ENCODE measurements at regions of chr3 and their contacts with region 1.

Region 1: GRCh38 chr3:72152551-72153476 is 367.9 kb upstream of the PROK2 start:
- DNase-seq: peak in 1 of 2 donors; percentile 84
- H3K4me3 ChIP-seq: peak overlapping the region; percentile 41 to 44
- H3K27ac ChIP-seq: peak overlapping the region in 1 of 2 donors; percentile 69
- H3K4me1 ChIP-seq: peaks cover 4 to 27% of the 10 kb centered on the region in 2 donors
- H3K27me3 ChIP-seq: no peaks in the 10 kb centered on the region
- CTCF ChIP-seq: no peak

Region 2: GRCh38 chr3:72100601-72101187 is 52.1 kb before region 1 on chr3:
- intact Hi-C with region 1: loop called (anchors 5 kb)
- DNase-seq: peak; percentile 80 to 95
- H3K4me3 ChIP-seq: peak overlapping the region; percentile 35 to 54
- H3K27ac ChIP-seq: no peak overlapping the region
- H3K4me1 ChIP-seq: peaks cover 0 to 6% of the 10 kb centered on the region in 2 donors
- H3K27me3 ChIP-seq: no peaks in the 10 kb centered on the region
- CTCF ChIP-seq: no peak

Region 3: DNA sequence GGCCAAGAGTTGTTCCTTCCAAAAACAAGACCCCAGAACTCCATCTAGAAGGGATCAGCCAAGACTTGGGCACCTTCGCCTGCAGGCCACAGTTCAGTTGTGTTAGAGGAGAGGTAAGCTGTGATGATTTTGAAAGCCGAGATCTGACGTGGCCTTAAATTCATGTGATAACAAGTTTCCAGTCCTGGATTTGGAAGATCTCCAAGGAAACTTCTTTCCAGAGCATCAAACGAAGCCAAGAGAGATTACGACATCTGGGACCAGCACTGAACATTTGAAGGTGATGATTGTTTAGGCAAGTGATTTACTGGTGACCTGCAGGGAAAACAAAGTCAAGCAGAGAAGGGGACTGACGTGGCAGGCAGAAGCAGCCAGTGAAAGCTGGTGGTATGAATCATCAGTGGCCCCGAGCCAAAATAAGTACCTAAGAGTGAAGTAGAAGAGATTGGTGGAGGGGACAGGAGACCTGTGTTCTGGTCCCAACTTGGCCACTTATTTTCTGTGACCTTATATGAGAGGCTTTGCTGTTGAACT is 28.8 kb before region 1 on chr3:
- intact Hi-C with region 1: loop called (anchors 2 kb)
- DNase-seq: peak in 1 of 2 donors; percentile 93
- H3K4me3 ChIP-seq: no peak overlapping the region
- H3K27ac ChIP-seq: peak overlapping the region; percentile 41 to 46
- H3K4me1 ChIP-seq: peaks cover 10 to 21% of the 10 kb centered on the region in 2 donors
- H3K27me3 ChIP-seq: no peaks in the 10 kb centered on the region
- CTCF ChIP-seq: no peak

Region 4: DNA sequence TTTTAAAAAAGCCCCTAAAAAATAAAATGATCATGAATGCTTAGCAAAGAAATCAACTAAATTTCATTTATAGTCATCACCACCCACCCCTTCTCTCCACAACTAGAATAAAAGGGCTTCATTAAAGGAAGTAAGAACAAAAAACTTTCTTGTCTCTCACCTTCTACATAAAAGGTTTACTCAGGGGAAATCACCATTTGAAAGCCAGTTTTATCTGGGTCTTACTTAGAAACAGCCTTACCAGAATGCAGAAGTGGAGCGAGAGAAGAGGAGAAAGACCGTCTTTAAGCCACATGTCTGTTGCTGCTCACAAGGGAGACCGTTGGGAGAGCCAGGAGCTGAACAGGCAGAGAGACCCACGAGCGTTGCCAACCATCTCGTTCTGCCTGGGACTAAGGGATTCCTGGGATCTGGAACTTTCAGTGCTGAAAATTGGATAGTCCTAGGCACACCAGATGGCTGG is 17.8 kb before region 1 on chr3:
- intact Hi-C with region 1: no loop called
- DNase-seq: no peak
- H3K4me3 ChIP-seq: no peak overlapping the region
- H3K27ac ChIP-seq: no peak overlapping the region
- H3K4me1 ChIP-seq: peaks cover 0 to under 1% of the 10 kb centered on the region in 2 donors
- H3K27me3 ChIP-seq: no peaks in the 10 kb centered on the region
- CTCF ChIP-seq: no peak

Region 5: DNA sequence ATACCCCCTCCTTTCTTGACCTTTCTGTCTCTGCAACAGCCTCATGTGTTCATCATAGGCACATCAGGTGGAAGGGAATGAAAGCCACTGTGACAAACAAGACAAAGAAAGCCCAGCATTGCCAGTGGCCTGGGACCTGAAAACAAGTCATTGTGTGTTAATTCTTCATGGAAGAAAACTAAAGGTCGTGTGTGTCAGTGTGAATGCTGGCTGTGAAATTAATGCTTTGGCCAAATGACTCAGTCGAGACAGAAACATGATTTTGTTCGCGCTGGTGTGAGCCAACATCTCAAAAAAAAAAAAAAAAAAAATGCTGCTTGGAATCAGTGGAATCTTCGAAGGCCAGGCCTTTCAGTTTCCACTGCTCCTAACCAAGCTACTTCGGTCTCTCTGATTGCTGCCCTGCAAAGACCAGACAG is 18.7 kb after region 1 on chr3:
- intact Hi-C with region 1: loop called (anchors 2 kb)
- DNase-seq: peak in 1 of 2 donors; percentile 72
- H3K4me3 ChIP-seq: peak overlapping the region; percentile 37 to 39
- H3K27ac ChIP-seq: peak overlapping the region; percentile 87 to 91
- H3K4me1 ChIP-seq: peaks cover 16 to 37% of the 10 kb centered on the region in 2 donors
- H3K27me3 ChIP-seq: no peaks in the 10 kb centered on the region
- CTCF ChIP-seq: no peak

Region 6: GRCh38 chr3:72245183-72245811 is 92.5 kb after region 1 on chr3:
- intact Hi-C with region 1: loop called (anchors 5 kb)
- DNase-seq: peak; percentile 18 to 83
- H3K4me3 ChIP-seq: no peak overlapping the region
- H3K27ac ChIP-seq: peak overlapping the region; percentile 69 to 79
- H3K4me1 ChIP-seq: peaks cover 24 to 43% of the 10 kb centered on the region in 2 donors
- H3K27me3 ChIP-seq: no peaks in the 10 kb centered on the region
- CTCF ChIP-seq: no peak